ENCODE measurements at regions of chr11 and their contacts with region 1.

Region 1: GRCh38 chr11:304915-305843 is 2.4 kb upstream of the IFITM2 start:
- DNase-seq: peak in 1 of 2 donors; percentile 77
- H3K4me3 ChIP-seq: no peak overlapping the region
- H3K27ac ChIP-seq: no peak overlapping the region
- H3K4me1 ChIP-seq: peaks cover 0 to 25% (median 11%) of the 10 kb centered on the region in 4 donors
- H3K27me3 ChIP-seq: peaks cover 0 to 4% of the 10 kb centered on the region in 2 donors
- CTCF ChIP-seq: peak; percentile 59 to 77

Region 2: GRCh38 chr11:250740-251299 is 54.4 kb before region 1 on chr11:
- intact Hi-C with region 1: loop called (anchors 10 kb)
- DNase-seq: peak; percentile 43 to 71
- H3K4me3 ChIP-seq: no peak overlapping the region
- H3K27ac ChIP-seq: no peak overlapping the region
- H3K4me1 ChIP-seq: no peaks in the 10 kb centered on the region
- H3K27me3 ChIP-seq: no peaks in the 10 kb centered on the region
- CTCF ChIP-seq: peak; percentile 54 to 55

Region 3: GRCh38 chr11:363948-364761 is 59.0 kb after region 1 on chr11:
- intact Hi-C with region 1: loop called (anchors 5 kb)
- DNase-seq: peak; percentile 7 to 65
- H3K4me3 ChIP-seq: no peak overlapping the region
- H3K27ac ChIP-seq: no peak overlapping the region
- H3K4me1 ChIP-seq: peaks cover 0 to 12% (median 10%) of the 10 kb centered on the region in 4 donors
- H3K27me3 ChIP-seq: peaks cover 0 to 66% of the 10 kb centered on the region in 2 donors
- CTCF ChIP-seq: no peak

Region 4: DNA sequence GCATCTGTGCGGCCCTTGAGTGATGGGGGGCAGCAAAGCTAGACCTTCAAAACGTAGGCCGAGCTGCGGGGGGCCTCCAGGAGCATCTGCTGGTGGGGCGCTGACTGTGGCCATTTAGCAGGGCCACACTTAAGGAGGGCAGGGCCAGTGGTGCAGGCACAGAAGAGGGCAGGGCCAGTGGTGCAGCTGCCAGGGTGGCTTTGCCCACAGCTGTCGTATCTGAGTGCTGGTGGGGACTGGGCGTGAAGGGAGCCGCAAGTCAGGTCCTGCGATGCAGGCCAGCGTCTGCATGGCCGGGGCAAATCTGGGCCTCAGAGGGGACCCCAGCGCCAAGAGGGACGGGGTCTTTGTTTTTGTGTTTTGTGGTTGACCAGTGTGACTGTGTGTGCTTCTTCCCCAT is 174.1 kb after region 1 on chr11:
- intact Hi-C with region 1: no loop called
- DNase-seq: no peak
- H3K4me3 ChIP-seq: no peak overlapping the region
- H3K27ac ChIP-seq: no peak overlapping the region
- H3K4me1 ChIP-seq: no peaks in the 10 kb centered on the region
- H3K27me3 ChIP-seq: no peaks in the 10 kb centered on the region
- CTCF ChIP-seq: no peak

Region 5: GRCh38 chr11:535519-536454 is 230.6 kb after region 1 on chr11 and contains the start of gene HRAS:
- intact Hi-C with region 1: loop called (anchors 10 kb)
- DNase-seq: peak; percentile 91 to 97
- H3K4me3 ChIP-seq: peak within 1 kb of the TSS; percentile 81 to 98
- H3K27ac ChIP-seq: peak within 1 kb of the TSS; percentile 76 to 78
- H3K4me1 ChIP-seq: peaks cover 3 to 44% (median 34%) of the 10 kb centered on the region in 4 donors
- H3K27me3 ChIP-seq: peaks cover 0 to 11% of the 10 kb centered on the region in 2 donors
- CTCF ChIP-seq: no peak

Measured in tibial artery (tissue), 4 donors.